ENCODE measurements at regions of chr9 and their contacts with region 1.

Region 1: GRCh38 chr9:127785023-127785932 is 556 bp upstream of the CDK9 start:
- DNase-seq: peak; percentile 91 to 94
- ATAC-seq: peak; percentile 44 to 67 (median 56)
- H3K4me3 ChIP-seq: peak overlapping the region; percentile 46
- H3K4me3 Mint-ChIP-seq: peak overlapping the region; percentile 93
- H3K27ac ChIP-seq: peak overlapping the region; percentile 88
- H3K27ac Mint-ChIP-seq: peak overlapping the region; percentile 95 to 98
- H3K4me1 ChIP-seq: peaks cover 68% of the 10 kb centered on the region
- H3K4me1 Mint-ChIP-seq: peaks cover 50 to 74% of the 10 kb centered on the region in 2 donors
- H3K27me3 ChIP-seq: no peaks in the 10 kb centered on the region
- H3K27me3 Mint-ChIP-seq: no peaks in the 10 kb centered on the region
- CTCF ChIP-seq: peak; percentile 80

Region 2: GRCh38 chr9:127714951-127715393 is 70.3 kb before region 1 on chr9:
- intact Hi-C with region 1: no loop called
- DNase-seq: no peak
- ATAC-seq: peak; percentile 0 to 1 (median 1)
- H3K4me3 ChIP-seq: peak overlapping the region; percentile 80
- H3K4me3 Mint-ChIP-seq: peak overlapping the region; percentile 99
- H3K27ac ChIP-seq: peak overlapping the region; percentile 54
- H3K27ac Mint-ChIP-seq: peak overlapping the region; percentile 93 to 94
- H3K4me1 ChIP-seq: peaks cover 65% of the 10 kb centered on the region
- H3K4me1 Mint-ChIP-seq: peaks cover 34 to 42% of the 10 kb centered on the region in 2 donors
- H3K27me3 ChIP-seq: no peaks in the 10 kb centered on the region
- H3K27me3 Mint-ChIP-seq: no peaks in the 10 kb centered on the region
- CTCF ChIP-seq: no peak

Region 3: GRCh38 chr9:127770905-127771569 is 14.2 kb before region 1 on chr9:
- intact Hi-C with region 1: loop called (anchors 1 kb)
- DNase-seq: peak; percentile 93 to 96
- ATAC-seq: peak; percentile 80 to 93 (median 83)
- H3K4me3 ChIP-seq: peak overlapping the region; percentile 53
- H3K4me3 Mint-ChIP-seq: peak overlapping the region; percentile 87
- H3K27ac ChIP-seq: peak overlapping the region; percentile 90
- H3K27ac Mint-ChIP-seq: peak overlapping the region; percentile 95 to 99
- H3K4me1 ChIP-seq: peaks cover 82% of the 10 kb centered on the region
- H3K4me1 Mint-ChIP-seq: peaks cover 54 to 63% of the 10 kb centered on the region in 2 donors
- H3K27me3 ChIP-seq: no peaks in the 10 kb centered on the region
- H3K27me3 Mint-ChIP-seq: no peaks in the 10 kb centered on the region
- CTCF ChIP-seq: no peak

Region 4: DNA sequence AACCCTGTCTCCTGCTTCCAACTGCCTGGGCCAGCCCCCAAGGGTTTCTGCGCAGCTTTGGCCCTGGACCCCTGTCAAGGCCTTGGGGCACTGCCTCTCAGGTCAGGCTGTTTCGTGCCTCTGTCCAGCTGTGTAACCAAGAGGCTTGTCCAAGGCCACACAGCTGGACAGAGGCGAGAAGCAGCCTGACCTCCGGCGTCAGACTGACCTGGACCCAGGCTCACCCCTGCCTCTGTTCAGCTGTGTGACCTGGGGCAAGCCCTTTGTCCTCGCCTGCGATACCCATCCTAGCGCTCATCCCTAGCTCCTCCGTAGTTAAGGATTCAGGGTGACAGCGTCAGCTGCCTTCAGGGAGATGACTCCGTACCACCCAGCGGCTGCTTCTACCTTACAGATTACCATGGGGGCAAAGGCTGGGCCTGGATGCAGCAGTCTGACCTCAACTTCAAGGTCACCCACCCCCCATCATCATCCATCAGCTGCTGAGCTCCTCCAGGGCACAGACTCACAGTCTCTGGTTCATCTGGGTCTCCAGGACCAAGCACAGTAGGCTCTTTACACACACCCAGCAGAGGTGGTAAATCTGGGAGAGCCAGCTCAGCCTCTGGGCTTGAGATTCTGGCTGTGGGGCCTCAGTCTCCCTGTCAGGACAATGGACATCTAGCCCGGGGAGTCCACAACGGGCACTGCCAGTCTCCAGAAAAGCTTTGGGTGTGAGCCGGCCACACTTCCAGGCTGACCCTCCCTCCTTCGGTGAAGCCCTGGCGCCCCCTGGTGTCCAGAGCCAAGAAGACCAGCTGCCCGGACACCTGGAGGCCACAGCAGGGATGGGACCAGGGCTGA is 84.3 kb after region 1 on chr9:
- intact Hi-C with region 1: loop called (anchors 5 kb)
- DNase-seq: peak; percentile 81 to 85
- ATAC-seq: peak; percentile 85 to 90 (median 88)
- H3K4me3 ChIP-seq: no peak overlapping the region
- H3K4me3 Mint-ChIP-seq: no peak overlapping the region
- H3K27ac ChIP-seq: no peak overlapping the region
- H3K27ac Mint-ChIP-seq: peak overlapping the region; percentile 56
- H3K4me1 ChIP-seq: peaks cover 24% of the 10 kb centered on the region
- H3K4me1 Mint-ChIP-seq: peaks cover 6 to 14% of the 10 kb centered on the region in 2 donors
- H3K27me3 ChIP-seq: no peaks in the 10 kb centered on the region
- H3K27me3 Mint-ChIP-seq: no peaks in the 10 kb centered on the region
- CTCF ChIP-seq: peak; percentile 95

Measured in natural killer cell (primary cell).